Heart right ventricle (tissue), 16 donors: ENCODE measurements at regions of chr11 and their contacts with region 1.

Region 1: DNA sequence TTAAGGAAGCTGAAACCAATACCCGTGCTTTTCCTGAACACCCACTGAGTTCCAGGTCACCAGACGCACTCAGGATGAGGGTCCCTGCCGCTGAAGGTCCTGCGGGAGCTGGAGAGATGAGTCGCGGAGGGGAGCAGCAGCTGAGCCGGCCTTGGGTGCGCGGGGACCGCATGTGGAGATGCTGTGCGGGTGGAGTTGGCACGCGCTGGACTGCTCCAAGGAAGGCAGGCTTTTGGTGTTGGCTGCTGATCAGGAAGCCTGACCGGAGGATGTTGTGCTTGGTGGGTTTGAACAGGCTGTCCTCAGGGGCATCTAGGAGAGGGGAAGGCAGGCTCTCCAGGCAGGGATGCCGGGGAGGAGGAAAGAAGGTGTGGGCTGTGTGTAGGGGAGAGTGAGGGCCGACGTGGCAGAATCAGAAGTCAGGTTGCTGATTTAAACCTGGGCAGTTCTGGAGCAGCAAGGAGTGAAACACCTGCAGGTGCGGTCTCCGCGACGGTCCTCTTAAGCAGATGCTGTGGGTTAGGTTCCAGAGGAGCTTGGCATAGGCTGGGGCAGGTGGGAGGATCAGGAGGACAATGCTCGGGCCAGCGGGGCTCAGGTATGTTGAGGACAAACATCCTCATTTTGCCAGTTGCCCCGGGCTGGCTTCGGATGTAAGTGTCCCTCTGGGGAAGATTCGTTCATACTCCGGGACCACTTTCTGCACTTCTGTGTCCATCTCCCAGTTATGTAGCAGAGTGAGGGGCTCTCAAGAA is 197.5 kb upstream of the B3GAT1 start:
- DNase-seq: no peak
- ATAC-seq: no peak
- H3K4me3 ChIP-seq: no peak overlapping the region
- H3K27ac ChIP-seq: no peak overlapping the region
- H3K4me1 ChIP-seq: no peaks in the 10 kb centered on the region
- H3K27me3 ChIP-seq: peaks cover 0 to 90% (median 7%) of the 10 kb centered on the region in 7 donors
- CTCF ChIP-seq: no peak

Region 2: GRCh38 chr11:134498326-134499139 is 111.0 kb before region 1 on chr11:
- intact Hi-C with region 1: no loop called
- DNase-seq: peak in 1 of 2 donors; percentile 28
- ATAC-seq: peak in 4 of 8 donors; percentile 50 to 59 (median 51)
- H3K4me3 ChIP-seq: no peak overlapping the region
- H3K27ac ChIP-seq: no peak overlapping the region
- H3K4me1 ChIP-seq: no peaks in the 10 kb centered on the region
- H3K27me3 ChIP-seq: peaks cover 0 to 61% (median 22%) of the 10 kb centered on the region in 7 donors
- CTCF ChIP-seq: no peak

Region 3: DNA sequence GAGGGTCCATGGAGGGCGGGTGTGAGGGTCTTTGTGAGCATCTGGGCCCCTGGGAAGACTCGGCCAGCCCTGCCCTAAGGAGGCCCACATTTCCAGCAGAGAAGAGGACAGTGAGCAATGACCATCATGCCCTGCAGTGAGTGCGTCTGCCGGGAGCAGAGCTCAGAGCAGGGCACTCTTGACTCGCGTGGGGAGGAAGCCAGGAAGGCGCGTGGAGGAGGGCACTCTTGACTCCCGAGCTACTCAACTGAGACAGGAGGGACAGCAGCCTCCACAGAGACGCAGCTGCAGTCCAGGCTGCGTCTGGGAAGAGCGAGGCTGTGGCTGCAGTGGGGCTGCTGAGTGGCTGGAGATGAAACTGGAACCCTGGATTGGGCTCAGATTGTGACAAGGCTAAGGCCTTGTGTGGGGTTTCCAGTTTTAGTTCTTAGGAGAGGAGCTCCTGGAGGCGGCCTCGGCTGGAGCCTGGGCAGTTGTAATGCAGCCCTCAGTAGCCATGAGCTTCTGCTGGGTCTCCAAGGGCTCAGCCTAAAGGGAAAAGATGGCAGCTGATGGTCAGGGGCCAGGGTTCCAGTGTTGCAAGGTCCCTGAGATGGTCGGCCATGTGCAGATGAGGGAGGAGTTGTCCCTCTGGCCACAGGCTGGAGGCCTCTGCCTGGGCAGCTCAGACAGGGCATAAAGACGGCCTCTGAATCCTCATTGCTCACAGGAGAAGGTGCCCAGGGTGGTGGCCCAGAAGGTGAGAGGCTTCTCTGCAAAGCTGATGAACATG is 67.2 kb after region 1 on chr11:
- intact Hi-C with region 1: loop called in 1 of 10 experiments (anchors 10 kb)
- DNase-seq: no peak
- ATAC-seq: no peak
- H3K4me3 ChIP-seq: no peak overlapping the region
- H3K27ac ChIP-seq: no peak overlapping the region
- H3K4me1 ChIP-seq: no peaks in the 10 kb centered on the region
- H3K27me3 ChIP-seq: peaks cover 0 to 30% (median 11%) of the 10 kb centered on the region in 7 donors
- CTCF ChIP-seq: no peak